ENCODE measurements at regions of chr2 and their contacts with region 1.

Region 1: DNA sequence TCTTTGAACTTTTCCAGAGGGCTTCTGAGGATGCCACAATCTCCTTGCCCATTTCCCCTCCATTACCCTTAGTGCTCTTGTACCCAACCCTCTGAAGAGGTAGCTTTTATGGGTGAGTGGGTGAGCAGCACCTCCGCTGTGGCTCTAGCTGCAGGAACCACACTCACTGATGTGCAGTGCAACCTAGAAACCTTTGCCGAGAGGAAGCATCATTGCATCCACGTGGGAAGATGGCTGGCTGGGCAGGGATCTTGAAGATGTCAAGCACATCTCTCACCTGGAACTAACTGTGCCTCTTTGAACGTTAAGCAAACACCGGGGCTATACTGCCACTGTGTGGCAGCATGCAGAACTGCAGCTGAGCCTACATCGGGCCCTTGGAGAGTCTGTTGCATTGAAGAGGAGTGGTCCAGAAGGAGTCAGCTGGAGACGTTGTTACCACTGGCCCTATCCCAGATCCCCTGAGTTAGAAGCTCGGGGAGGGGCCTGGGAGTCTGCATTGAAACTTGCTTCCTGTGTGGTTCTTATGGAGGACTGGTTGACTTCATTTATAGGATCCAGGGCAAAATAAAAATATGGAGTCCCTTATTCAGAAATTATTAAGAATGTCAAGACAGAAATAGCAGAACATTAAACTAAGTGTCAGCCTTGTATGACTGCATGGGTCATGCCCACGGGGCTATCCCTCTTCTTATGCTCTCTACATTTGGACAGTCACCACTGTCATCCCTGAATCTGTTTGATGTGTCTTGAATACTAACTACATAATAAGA is 28.7 kb downstream of the IGFBP5 start:
- DNase-seq: no peak

Region 2: DNA sequence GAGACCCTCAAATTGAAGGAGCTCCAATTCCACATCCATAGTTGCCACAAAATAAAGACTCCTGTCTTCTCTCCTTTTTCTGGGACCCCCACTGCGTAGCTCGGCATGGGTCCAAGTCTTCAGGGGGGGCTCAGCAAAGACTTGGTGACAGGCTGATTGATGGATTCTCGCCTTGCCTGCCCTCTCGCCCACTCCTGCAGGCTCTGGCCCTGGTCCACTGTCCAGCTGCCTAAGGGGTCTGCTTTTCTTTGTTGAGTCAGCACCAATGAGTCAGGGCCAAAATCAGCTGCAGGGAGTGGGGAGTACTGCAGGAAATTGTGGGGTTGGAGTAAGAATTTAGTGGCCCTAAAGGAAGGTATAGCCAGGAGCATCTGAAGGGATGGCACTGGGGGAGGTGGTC is 146.5 kb before region 1 on chr2:
- intact Hi-C with region 1: loop called (anchors 2 kb)
- DNase-seq: no peak

Region 3: DNA sequence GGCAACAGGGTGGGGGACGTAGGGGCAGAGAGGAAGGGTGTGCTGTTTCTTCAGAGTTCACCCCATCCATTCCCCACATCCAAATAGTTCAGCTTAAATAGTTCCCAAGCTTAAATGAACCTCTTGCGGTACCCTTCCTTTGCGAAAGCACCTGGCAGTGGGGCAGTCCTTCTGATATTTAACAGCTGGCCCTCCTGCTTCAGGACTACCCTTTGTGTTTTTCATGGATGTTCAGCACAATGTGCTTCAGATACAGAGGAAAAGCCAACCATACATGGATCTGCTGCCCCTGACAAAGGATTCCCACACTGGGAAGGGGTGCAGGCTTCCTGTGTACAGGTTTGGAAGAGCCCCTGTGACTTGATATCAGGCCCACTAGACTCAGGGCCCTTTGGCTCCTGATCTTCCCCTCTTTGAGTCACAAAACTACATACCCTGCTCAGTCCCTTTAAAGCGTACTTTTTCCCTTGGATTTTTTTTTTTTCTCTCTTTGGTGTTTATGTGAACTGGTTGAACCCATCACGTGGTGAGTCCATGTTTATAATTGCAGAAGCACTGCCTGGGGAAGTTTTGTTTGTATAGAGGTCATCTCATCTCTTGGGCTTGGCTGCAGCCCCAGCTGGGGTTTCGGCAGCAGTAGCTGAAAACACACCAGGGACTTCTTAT is 74.0 kb after region 1 on chr2:
- intact Hi-C with region 1: no loop called
- DNase-seq: no peak

Measured in posterior vena cava (tissue), 2 donors.